ENCODE measurements at regions of chr6 and their contacts with region 1.

Region 1: GRCh38 chr6:151451950-151452749 is at the start of gene RMND1:
- DNase-seq: peak; percentile 97 to 100
- ATAC-seq: peak; percentile 93 to 99 (median 95)
- H3K4me3 ChIP-seq: peak within 1 kb of the TSS; percentile 80
- H3K4me3 Mint-ChIP-seq: peak within 1 kb of the TSS; percentile 98
- H3K27ac ChIP-seq: peak within 1 kb of the TSS; percentile 86
- H3K27ac Mint-ChIP-seq: peak within 1 kb of the TSS; percentile 90 to 91
- H3K4me1 ChIP-seq: peaks cover 4% of the 10 kb centered on the region
- H3K4me1 Mint-ChIP-seq: peaks cover 42 to 43% of the 10 kb centered on the region in 2 donors
- H3K27me3 ChIP-seq: no peaks in the 10 kb centered on the region
- H3K27me3 Mint-ChIP-seq: no peaks in the 10 kb centered on the region
- CTCF ChIP-seq: no peak
- total RNA-seq, gene RMND1: 10.6 to 14.7 (median 11.3) TPM

Region 2: DNA sequence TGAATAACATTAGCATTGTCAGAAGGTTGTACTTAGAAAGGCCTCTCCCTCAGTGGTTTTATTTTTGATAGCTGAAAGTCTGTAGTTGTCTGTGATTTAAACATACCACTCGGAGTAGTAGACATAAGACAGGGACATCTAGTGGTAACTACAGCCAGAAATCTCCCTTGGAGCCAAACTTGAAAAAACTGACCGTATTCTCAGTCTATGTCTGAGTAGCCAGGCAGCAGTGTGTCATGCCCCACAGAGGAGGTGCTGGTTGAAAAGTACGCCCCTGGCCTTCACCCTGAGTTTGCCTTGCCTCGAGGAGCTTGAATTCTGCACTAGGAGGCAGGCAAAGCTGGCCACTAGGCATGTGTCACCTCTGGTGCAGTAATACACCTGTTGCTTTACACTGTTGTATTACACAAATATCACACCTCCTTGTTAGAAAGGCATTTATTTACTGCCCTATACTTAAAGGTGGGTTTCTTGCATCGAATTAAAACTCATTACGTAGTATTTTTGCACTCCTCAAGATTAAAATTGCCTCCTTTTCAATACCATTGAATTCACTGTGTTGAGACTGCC is 81.6 kb before region 1 on chr6:
- intact Hi-C with region 1: loop called (anchors 1 kb)
- DNase-seq: no peak
- ATAC-seq: no peak
- H3K4me3 ChIP-seq: no peak overlapping the region
- H3K4me3 Mint-ChIP-seq: no peak overlapping the region
- H3K27ac ChIP-seq: no peak overlapping the region
- H3K27ac Mint-ChIP-seq: peak overlapping the region; percentile 92 to 95
- H3K4me1 ChIP-seq: peaks cover 41% of the 10 kb centered on the region
- H3K4me1 Mint-ChIP-seq: peaks cover 44 to 46% of the 10 kb centered on the region in 2 donors
- H3K27me3 ChIP-seq: no peaks in the 10 kb centered on the region
- H3K27me3 Mint-ChIP-seq: no peaks in the 10 kb centered on the region
- CTCF ChIP-seq: no peak

Region 3: DNA sequence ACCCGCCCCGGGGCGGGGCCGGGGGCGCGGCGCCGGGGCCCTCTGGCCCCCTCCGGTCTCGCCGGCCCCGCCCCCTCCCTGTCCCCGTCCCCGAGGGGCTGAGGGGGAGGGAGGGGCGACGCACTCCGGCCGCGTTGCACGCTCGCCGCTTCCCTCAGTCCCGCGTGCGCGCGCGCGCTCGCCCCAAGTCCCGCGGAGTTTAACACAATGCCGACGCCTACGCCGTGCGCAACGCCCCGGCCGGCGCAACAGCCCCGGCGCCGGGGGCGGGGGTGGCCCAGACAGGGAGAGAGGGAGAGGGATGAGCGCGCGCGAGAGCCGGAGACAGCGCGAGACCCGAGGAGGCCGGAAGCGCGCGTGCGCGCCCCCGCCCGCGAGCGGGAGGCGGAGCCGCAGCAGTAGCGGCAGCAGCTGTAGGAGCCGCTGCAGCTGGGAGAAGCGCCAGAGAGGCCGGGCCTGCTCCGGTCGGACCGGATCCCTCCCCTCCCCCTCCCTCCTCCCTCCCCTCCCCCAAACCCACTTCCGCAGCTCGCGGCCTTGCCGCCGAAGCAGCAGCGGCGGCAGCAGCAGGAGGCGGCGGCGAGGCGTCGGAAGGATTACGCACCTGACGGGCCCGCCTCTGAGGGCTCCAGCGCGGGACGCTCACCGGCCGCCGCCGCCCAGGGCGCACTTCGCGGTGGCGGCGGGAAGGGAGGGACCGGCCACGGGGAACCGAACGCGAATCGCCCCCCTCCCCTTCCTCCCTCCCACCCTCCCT is 61.7 kb before region 1 on chr6:
- intact Hi-C with region 1: loop called (anchors 1 kb)
- DNase-seq: peak; percentile 96 to 99
- ATAC-seq: peak; percentile 74 to 92 (median 75)
- H3K4me3 ChIP-seq: peak overlapping the region; percentile 70
- H3K4me3 Mint-ChIP-seq: peak overlapping the region; percentile 95
- H3K27ac ChIP-seq: peak overlapping the region; percentile 95
- H3K27ac Mint-ChIP-seq: peak overlapping the region; percentile 95 to 99
- H3K4me1 ChIP-seq: peaks cover 36% of the 10 kb centered on the region
- H3K4me1 Mint-ChIP-seq: peaks cover 52% of the 10 kb centered on the region in 2 donors
- H3K27me3 ChIP-seq: no peaks in the 10 kb centered on the region
- H3K27me3 Mint-ChIP-seq: no peaks in the 10 kb centered on the region
- CTCF ChIP-seq: no peak

Region 4: DNA sequence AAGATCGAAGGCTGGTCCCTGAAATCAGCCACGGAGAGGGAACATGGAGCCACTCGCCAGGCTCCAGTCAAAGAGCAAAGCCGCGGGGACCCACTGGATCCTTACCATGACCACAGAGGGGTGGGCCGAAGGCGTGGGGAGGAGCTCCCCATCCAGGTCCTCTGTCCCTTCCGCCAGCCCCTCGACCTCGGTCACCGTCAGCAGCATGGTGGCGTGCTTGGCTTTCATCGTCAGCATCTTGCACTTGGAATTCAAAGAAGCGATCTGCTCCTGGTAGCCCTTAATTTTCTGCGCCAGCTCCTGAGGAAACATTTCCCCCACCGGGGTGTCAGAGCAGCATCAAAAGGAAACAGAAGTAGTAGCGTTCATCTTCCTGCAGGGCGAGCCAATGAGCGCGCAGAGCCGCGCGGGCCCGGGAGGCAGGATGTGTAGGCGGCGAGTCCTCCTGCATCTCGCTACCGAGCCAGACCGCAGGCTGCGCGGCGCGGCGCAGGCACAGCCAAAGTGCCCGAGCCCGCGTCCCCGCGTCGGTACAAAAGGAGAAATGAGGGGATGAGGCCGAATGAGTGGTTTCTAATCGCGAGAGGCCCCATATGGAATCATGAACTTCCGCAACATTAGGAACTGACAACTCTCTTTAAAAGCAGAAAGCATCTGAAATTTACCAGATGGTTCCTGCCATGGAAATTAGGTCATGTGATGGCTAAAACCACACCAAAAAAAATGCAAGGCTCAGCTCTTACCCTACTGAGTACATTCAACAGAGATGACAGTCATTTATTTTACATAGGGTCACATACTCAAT is 849.8 kb after region 1 on chr6:
- intact Hi-C with region 1: loop called (anchors 5 kb)
- DNase-seq: peak; percentile 88 to 94
- ATAC-seq: peak; percentile 92 to 98 (median 96)
- H3K4me3 ChIP-seq: peak overlapping the region; percentile 80
- H3K4me3 Mint-ChIP-seq: peak overlapping the region; percentile 100
- H3K27ac ChIP-seq: peak overlapping the region; percentile 82
- H3K27ac Mint-ChIP-seq: peak overlapping the region; percentile 98
- H3K4me1 ChIP-seq: peaks cover 3% of the 10 kb centered on the region
- H3K4me1 Mint-ChIP-seq: peaks cover 30 to 33% of the 10 kb centered on the region in 2 donors
- H3K27me3 ChIP-seq: no peaks in the 10 kb centered on the region
- H3K27me3 Mint-ChIP-seq: no peaks in the 10 kb centered on the region
- CTCF ChIP-seq: peak; percentile 54

Region 5: DNA sequence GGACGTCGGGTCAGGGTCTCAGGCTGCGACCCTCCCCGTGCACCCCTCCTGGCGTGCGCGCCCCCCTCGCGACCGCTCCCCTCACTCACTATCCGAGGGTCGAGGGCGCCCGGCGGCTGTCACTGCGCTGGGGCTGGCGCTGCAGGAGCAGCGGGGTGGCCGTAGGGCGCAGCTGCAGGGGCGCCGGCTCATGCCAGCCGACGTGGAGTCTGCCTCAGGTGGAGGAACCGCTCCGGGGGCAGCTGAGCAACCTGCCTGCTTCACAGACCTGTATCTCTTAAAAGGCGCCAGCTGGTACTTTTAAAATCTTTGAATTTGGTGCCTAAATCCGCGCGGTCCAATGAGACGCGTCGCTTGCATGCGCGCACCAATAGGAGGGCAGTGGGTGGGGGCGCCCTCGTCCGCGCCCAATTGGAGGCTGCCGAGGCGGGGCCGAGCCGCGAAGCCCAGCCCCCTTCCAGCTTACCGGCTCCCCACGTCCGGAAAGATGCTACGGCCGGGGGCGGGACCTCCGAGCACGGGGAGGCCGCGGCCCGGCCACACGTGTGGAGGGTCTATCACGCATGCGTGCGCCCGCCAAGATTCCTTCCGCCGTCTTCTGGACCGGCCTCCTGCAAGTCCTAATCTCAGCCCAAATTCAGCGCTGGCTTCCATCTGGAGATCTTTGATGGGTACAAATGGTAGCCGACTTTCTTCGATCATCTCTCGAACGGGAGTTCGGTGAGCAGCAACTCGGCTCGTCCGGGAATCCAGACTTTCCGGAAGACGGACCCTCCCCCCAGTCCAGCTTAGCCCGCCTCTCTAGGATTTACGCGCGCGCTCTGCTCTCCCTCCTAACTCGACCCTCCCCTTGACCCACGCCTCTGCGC is 1530.9 kb after region 1 on chr6 and contains the start of gene FBXO5:
- intact Hi-C with region 1: loop called (anchors 2 kb)
- DNase-seq: peak; percentile 98
- ATAC-seq: peak; percentile 91 to 99 (median 92)
- H3K4me3 ChIP-seq: peak within 1 kb of the TSS; percentile 90
- H3K4me3 Mint-ChIP-seq: peak within 1 kb of the TSS; percentile 98
- H3K27ac ChIP-seq: peak within 1 kb of the TSS; percentile 91
- H3K27ac Mint-ChIP-seq: peak within 1 kb of the TSS; percentile 97
- H3K4me1 ChIP-seq: peaks cover 23% of the 10 kb centered on the region
- H3K4me1 Mint-ChIP-seq: peaks cover 25 to 36% of the 10 kb centered on the region in 2 donors
- H3K27me3 ChIP-seq: no peaks in the 10 kb centered on the region
- H3K27me3 Mint-ChIP-seq: no peaks in the 10 kb centered on the region
- CTCF ChIP-seq: no peak
- total RNA-seq, gene FBXO5: 5.9 to 11.2 (median 9.6) TPM

Measured in natural killer cell (primary cell).